Activated CD4-positive, alpha-beta T cell treated with anti-CD3 and anti-CD28 coated beads for 36 hours (primary cell): ENCODE measurements at regions of chr13 and their contacts with region 1.

Region 1: DNA sequence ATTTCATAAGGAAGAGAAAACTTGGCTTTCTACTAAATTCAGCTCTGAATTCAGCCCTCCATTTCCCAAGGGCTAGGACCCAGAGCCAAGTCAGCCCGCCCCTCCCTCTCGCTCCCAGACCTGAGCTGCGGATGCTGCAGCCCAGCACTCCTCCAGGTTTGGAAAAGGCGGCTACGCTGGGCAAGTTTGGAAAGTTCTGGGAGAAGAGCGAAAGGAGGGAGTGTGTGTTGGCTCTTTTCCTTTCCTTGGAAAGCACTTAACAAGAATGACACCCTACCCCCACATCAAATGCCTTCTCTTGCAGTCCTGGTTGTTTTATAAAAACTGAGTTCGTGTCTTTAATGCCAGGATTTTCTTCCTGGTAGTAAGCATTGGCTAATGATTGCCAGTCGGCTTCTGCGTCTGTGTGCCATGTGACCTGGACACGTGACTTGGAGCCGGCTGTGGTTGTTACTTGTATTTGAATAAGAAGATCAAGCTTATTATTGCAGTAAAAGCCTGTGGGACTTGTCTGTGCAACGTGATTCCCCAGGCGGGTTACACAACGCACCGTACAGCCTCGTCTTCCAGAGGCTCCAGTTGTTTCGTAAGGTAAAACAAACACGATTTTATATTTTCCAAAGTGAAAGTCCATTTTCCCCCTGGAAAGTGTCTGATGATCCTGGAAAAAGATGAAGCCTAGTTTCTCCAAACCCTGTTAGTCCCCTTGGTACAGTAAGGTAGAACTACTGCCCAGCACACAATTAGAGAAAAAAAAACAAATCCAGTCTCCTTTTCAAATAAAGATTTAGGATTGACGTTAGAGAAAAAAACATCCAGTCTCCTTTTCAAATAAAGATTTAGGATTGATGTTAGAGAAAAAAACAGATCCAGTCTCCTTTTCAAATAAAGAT is 26.9 kb upstream of the UBE2L5 start:
- DNase-seq: peak; percentile 85
- ATAC-seq: peak; percentile 68
- H3K4me3 Mint-ChIP-seq: peak overlapping the region; percentile 82
- H3K27ac Mint-ChIP-seq: peak overlapping the region; percentile 96
- H3K4me1 Mint-ChIP-seq: peaks cover 26% of the 10 kb centered on the region
- H3K27me3 Mint-ChIP-seq: no peaks in the 10 kb centered on the region

Region 2: GRCh38 chr13:29771247-29771646 is 624.2 kb before region 1 on chr13:
- CTCF ChIA-PET with region 1: no interaction called
- POLR2A ChIA-PET with region 1: no interaction called
- intact Hi-C with region 1: no loop called
- DNase-seq: no peak
- ATAC-seq: no peak
- H3K4me3 Mint-ChIP-seq: no peak overlapping the region
- H3K27ac Mint-ChIP-seq: no peak overlapping the region
- H3K4me1 Mint-ChIP-seq: peaks cover 8% of the 10 kb centered on the region
- H3K27me3 Mint-ChIP-seq: no peaks in the 10 kb centered on the region

Region 3: GRCh38 chr13:29850224-29850898 is 545.1 kb before region 1 on chr13 and contains the start of gene UBL3:
- CTCF ChIA-PET with region 1: no interaction called
- POLR2A ChIA-PET with region 1: no interaction called
- intact Hi-C with region 1: no loop called
- DNase-seq: peak; percentile 98
- ATAC-seq: peak; percentile 86
- H3K4me3 Mint-ChIP-seq: peak within 1 kb of the TSS; percentile 90
- H3K27ac Mint-ChIP-seq: peak within 1 kb of the TSS; percentile 98
- H3K4me1 Mint-ChIP-seq: peaks cover 42% of the 10 kb centered on the region
- H3K27me3 Mint-ChIP-seq: no peaks in the 10 kb centered on the region
- total RNA-seq, gene UBL3: 9.1 to 10.7 TPM

Region 4: DNA sequence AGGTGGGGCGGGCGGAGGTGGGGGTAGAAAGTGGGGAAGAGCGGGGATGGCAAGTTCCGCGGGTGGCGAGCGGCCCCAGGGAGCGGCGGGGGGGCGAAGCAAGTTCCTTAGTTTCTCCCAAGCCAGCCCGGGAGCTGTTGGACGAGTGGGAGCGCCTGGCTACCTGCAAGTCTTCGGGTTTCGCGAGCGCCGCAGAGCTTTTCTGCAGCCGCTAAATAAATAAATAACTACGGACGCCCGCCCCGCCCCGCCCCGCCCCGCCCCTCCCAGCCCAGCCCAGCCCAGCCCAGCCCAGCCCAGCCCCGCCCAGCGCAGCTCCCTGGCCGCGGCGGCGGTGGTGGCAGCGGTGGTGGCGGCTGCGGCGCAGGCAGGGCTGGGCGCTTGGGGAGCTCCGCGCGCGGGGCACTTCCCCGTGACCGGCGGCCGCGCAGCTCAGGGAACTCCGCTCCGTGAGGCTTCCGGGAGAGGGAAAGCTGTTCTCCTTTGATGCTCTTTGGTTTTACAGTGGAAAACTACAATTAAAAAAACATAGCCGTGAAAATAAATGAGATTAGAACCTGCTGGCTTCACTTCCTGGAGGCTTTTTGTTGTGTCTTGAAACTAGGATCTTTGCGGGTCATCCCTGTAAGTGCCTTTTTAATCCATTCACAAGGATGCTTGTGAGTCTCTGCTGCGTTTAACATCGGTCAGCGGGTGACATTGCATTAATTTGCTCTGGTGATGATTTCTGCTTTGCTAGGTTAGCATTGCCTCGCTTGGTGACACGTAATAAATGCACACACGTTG is 26.8 kb after region 1 on chr13 and contains the start of gene UBE2L5:
- CTCF ChIA-PET with region 1: interaction called, 3 read pairs
- POLR2A ChIA-PET with region 1: interaction called, 3 read pairs
- intact Hi-C with region 1: loop called in 1 of 2 experiments (anchors 2 kb)
- DNase-seq: peak; percentile 85
- ATAC-seq: peak; percentile 96
- H3K4me3 Mint-ChIP-seq: peak within 1 kb of the TSS; percentile 77
- H3K27ac Mint-ChIP-seq: peak within 1 kb of the TSS; percentile 69
- H3K4me1 Mint-ChIP-seq: peaks cover 12% of the 10 kb centered on the region
- H3K27me3 Mint-ChIP-seq: no peaks in the 10 kb centered on the region
- total RNA-seq, gene UBE2L5: 0.11 TPM in 1 of 2 experiments, not detected in the other

Region 5: DNA sequence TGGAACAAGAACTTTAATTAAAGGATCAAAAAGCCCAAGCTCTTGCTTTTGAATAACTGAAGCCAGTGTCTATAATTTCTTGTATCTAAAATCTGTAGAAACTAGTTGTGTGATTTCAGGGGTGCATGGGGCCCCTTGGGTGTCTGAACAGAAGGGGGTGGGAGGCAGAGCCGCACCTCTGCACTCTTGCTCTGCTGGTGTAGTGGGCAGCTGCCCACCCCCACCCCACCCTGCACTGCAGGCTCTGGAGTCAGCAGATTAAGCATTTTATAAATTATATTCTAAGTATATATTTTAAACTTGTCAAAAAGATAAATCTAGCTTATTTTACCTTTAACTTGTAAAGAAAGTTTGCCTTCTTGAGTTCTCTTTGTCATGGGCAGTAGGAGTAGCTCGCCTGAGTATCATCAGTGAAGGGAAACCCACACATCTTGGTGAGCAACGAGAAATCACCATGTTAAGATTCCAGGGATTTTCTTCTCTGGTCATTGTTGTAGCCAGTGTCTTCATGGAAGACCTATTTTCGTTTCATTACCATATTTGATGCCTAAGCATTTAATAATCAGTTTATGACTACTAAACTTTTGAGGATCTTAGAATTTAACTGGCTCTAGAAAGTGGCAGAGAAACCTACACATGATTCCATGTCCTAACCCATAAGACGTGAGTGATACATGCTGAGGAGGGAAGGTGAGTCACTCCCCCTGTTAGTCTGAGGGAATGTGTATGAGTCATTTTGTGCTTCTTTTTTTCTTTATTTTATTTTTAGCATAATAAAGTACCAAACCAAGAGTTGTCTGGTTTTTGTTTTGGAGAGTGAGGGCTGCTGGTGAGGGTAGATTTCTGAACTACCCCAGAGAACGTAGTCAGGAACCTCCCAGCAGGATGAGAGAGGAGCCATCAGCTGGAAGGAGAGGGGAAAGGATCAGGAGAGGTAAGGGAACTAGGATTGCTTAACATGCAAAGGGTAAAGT is 34.6 kb after region 1 on chr13:
- CTCF ChIA-PET with region 1: interaction called, 3 read pairs
- POLR2A ChIA-PET with region 1: interaction called, 3 read pairs
- intact Hi-C with region 1: loop called in 1 of 2 experiments (anchors 2 kb)
- DNase-seq: peak; percentile 50
- ATAC-seq: peak; percentile 99
- H3K4me3 Mint-ChIP-seq: peak overlapping the region; percentile 37
- H3K27ac Mint-ChIP-seq: peak overlapping the region; percentile 93
- H3K4me1 Mint-ChIP-seq: peaks cover 30% of the 10 kb centered on the region
- H3K27me3 Mint-ChIP-seq: no peaks in the 10 kb centered on the region